Cardiac septum (tissue), 1 donor: ENCODE measurements at regions of chr17 and their contacts with region 1.

Region 1: GRCh38 chr17:67312265-67312664 is 54.1 kb downstream of the PSMD12 start:
- DNase-seq: no peak

Region 2: DNA sequence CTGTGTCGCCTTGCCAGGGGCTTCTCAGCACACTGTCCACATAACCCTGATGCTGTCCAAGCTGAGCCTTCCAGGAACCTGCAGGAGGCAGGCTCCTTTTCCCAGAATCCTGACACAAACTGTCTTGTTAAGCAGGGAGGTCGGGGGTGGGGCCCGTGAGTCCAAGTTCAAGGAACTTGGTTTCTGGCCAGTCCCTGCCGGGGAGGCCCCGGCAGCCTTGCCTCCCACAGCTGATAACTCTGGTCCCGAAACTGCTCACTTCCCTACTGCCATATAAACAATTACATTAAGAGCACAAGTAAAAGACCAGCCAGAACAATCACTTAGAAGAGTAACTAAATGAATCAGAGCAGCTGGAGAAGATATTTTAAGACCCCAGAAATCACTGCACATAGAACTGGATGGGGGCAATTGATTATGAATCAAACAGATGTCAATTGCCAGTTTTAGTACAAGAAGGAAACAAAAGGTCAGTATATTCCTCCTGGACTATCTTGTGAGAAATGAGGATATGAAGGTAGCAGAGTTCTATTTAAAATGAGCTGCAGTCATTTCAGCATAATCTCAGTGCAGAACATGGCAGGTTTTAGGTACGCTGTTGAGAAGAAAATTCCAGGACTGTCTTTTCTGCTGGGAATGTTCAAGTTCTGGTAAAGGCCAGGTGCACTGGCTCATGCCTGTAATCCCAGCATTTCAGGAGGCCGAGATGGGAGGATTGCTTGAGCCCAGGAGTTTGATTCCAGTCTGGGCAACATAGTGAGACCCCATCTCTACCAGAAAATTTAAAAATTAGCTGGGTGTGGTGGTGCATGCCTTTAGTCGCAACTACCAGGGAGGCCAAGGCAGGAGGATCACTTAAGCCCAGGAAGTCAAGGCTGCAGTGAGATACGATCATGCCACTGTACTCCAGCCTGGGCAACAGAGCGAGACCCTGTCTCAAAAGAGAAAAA is 234.6 kb after region 1 on chr17:
- intact Hi-C with region 1: loop called (anchors 5 kb)
- DNase-seq: no peak